Naive thymus-derived CD8-positive, alpha-beta T cell (primary cell): ENCODE measurements at regions of chr3 and their contacts with region 1.

Region 1: DNA sequence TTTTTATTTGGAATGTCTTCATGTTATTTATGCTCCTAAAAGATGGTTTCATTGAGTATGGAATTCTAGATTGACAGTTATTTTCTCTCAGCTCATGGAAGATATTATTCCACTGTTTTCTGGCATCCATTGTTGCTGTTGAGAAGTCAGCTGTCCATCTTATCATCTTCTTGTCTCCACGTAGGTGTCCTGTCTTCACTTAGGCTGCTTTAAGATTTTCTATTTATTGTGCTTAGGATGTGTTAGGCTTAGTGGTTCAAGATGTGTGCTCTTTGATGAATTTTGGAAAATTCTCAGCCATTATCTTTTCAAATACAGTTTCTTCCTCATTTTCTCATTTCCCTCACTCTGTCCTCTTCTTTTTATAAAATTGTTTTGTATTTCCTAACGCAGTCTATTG is 52.0 kb downstream of the SNRK start:
- DNase-seq: no peak
- ATAC-seq: no peak
- H3K4me3 Mint-ChIP-seq: peak overlapping the region in 1 of 10 donors; percentile 22
- H3K27ac Mint-ChIP-seq: peak overlapping the region in 8 of 10 donors; percentile 6 to 70 (median 32)
- H3K4me1 Mint-ChIP-seq: peaks cover 10 to 32% (median 25%) of the 10 kb centered on the region in 4 donors
- H3K27me3 Mint-ChIP-seq: no peaks in the 10 kb centered on the region

Region 2: DNA sequence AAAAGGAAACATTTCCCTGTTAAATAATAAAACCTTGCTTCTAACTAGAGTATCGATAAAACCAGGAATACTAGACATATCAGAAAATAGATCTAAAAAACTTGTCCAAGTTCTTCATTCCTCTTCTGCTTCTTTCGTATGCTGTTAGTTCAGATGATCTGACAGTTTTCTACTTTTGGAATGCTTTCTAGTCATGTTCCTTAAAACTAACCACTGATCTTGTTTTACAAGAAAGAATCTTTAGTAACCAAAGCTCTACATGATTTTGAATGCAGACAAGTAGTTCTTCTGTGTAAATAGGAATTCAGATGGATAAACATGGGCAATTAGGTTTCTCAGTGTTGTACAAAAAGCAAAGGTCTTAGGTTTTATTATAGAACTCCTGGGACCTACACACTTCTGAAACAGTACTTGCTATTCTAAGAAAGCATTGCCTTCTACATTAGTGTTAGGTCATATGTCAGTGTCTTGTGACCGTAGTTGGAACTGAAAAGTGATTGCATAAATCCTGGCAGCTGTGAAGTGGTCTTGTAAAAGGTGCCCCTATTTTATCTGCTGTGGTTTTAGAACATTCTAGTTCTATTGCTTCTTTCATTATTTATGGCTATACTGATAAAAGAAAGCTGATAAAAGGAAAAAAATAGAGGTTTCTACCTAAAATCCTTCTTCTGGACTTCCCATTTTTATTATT is 11.3 kb before region 1 on chr3:
- POLR2A ChIA-PET with region 1: interaction called, 19 read pairs
- DNase-seq: peak in 1 of 10 donors; percentile 36
- ATAC-seq: peak; percentile 57 to 75
- H3K4me3 Mint-ChIP-seq: peak overlapping the region; percentile 53 to 78 (median 67)
- H3K27ac Mint-ChIP-seq: peak overlapping the region; percentile 81 to 92 (median 88)
- H3K4me1 Mint-ChIP-seq: peaks cover 33 to 90% (median 80%) of the 10 kb centered on the region in 4 donors
- H3K27me3 Mint-ChIP-seq: no peaks in the 10 kb centered on the region

Region 3: DNA sequence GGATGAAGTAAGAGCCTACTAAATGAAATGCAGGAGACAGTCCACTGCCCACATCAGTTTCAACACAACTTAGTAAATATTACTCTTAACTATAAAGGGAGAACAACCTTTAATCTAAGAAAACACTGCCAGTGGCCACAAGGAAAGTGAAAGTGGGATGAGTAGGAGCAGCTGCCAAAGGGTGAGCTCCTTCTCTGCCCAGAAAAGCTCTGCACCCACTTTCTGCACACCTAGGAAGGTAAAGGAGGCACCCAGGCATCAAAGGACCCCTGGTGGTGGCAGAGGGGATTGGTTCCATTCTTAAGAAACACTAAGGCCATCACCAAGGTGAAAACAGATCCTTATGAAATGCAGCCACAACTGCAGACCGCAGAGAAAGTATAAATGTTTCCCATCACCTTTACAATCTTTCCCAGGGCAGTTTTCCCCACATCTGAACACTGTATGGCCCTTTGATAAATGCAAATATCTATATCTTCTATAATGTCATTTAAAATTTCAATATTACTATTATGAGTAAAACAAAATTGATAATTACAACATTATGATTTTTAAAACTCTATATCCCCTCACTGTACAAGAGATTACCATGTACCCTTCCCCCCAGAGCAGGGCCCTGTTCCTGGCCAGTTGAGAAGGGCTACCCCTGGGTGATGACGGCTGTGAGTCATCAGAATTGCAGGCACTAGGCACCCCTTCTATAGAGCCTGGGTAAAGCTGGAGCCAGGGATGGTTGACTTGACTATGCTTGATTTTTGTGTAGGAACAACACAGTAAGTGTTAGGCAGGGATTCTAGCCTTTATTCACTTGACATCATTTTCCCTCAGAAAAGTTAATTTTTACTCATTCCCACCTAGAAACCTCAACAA is 40.0 kb after region 1 on chr3:
- POLR2A ChIA-PET with region 1: no interaction called
- DNase-seq: peak; percentile 48 to 86 (median 72)
- ATAC-seq: peak; percentile 97 to 98
- H3K4me3 Mint-ChIP-seq: peak overlapping the region in 3 of 10 donors; percentile 24 to 29 (median 26)
- H3K27ac Mint-ChIP-seq: peak overlapping the region; percentile 70 to 91 (median 82)
- H3K4me1 Mint-ChIP-seq: peaks cover 18 to 37% (median 25%) of the 10 kb centered on the region in 4 donors
- H3K27me3 Mint-ChIP-seq: no peaks in the 10 kb centered on the region